Kidney (tissue), 22 donors: ENCODE measurements at regions of chr17 and their contacts with region 1.

Region 1: GRCh38 chr17:82461827-82462524 is 3.4 kb downstream of the NARF start:
- DNase-seq: peak in 1 of 5 donors; percentile 68
- H3K4me3 ChIP-seq: no peak overlapping the region
- H3K27ac ChIP-seq: no peak overlapping the region
- H3K4me1 ChIP-seq: peaks cover 4 to 8% (median 5%) of the 10 kb centered on the region in 3 donors
- H3K27me3 ChIP-seq: no peaks in the 10 kb centered on the region
- CTCF ChIP-seq: no peak

Region 2: GRCh38 chr17:82400830-82401229 is 61.1 kb before region 1 on chr17:
- intact Hi-C with region 1: no loop called
- DNase-seq: peak in 1 of 5 donors; percentile 74
- H3K4me3 ChIP-seq: no peak overlapping the region
- H3K27ac ChIP-seq: no peak overlapping the region
- H3K4me1 ChIP-seq: no peaks in the 10 kb centered on the region
- H3K27me3 ChIP-seq: no peaks in the 10 kb centered on the region
- CTCF ChIP-seq: no peak

Region 3: GRCh38 chr17:82577300-82577699 is 115.3 kb after region 1 on chr17:
- intact Hi-C with region 1: loop called (anchors 10 kb)
- DNase-seq: no peak
- H3K4me3 ChIP-seq: no peak overlapping the region
- H3K27ac ChIP-seq: no peak overlapping the region
- H3K4me1 ChIP-seq: peaks cover 0 to 7% (median 0%) of the 10 kb centered on the region in 3 donors
- H3K27me3 ChIP-seq: no peaks in the 10 kb centered on the region
- CTCF ChIP-seq: no peak

Region 4: DNA sequence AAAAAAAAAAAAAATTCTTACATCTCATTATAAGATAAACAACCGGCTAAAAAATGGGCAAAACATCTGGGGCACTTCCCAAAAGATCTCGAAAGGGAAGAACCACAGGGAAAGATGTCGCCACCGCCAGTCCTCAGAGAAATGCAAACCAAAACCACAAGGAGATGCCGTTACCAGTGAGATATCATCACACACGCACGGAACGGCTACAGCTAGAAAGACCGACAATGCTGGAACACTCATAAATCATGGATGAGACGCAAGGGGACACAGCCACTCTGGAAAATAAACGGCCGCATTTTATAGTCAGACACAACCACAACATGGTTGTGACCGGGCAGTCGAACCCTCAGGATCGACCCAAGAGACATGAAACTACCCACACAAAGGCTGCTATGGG is 161.7 kb after region 1 on chr17:
- intact Hi-C with region 1: no loop called
- DNase-seq: no peak
- H3K4me3 ChIP-seq: no peak overlapping the region
- H3K27ac ChIP-seq: no peak overlapping the region
- H3K4me1 ChIP-seq: no peaks in the 10 kb centered on the region
- H3K27me3 ChIP-seq: no peaks in the 10 kb centered on the region
- CTCF ChIP-seq: no peak